ENCODE measurements at regions of chr5 and their contacts with region 1.

Region 1: DNA sequence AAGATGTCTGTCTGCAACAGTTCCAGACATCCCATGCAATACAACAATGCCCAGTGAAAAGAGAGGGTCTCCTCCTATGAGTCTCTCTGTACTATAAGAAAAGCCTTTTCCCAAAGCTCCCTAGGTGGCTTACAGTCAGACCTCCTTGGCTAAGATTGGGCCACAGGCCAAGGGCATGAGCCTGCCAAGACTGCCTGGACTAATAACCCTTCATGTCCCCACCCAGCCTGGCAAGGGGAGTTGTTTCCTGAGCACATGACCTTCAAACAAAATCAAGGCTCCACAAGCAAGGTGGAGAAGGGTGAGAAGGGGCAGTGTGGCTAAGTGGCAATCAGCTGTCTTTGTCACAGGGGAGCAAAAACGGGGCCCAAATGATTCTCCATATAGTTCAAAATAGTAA is 75.6 kb upstream of the ZSWIM6 start:
- DNase-seq: peak in 1 of 2 experiments; percentile 26
- H3K4me3 ChIP-seq: no peak overlapping the region
- H3K27ac ChIP-seq: no peak overlapping the region
- H3K4me1 ChIP-seq: peaks cover 34% of the 10 kb centered on the region
- H3K27me3 ChIP-seq: no peaks in the 10 kb centered on the region
- CTCF ChIP-seq: no peak

Region 2: GRCh38 chr5:60149081-60149480 is 1107.4 kb before region 1 on chr5:
- CTCF ChIA-PET with region 1: no interaction called
- POLR2A ChIA-PET with region 1: interaction called, 10 read pairs
- intact Hi-C with region 1: no loop called
- DNase-seq: no peak
- H3K4me3 ChIP-seq: no peak overlapping the region
- H3K27ac ChIP-seq: no peak overlapping the region
- H3K4me1 ChIP-seq: no peaks in the 10 kb centered on the region
- H3K27me3 ChIP-seq: no peaks in the 10 kb centered on the region
- CTCF ChIP-seq: no peak

Region 3: GRCh38 chr5:60436518-60436917 is 820.0 kb before region 1 on chr5:
- CTCF ChIA-PET with region 1: no interaction called
- POLR2A ChIA-PET with region 1: no interaction called
- intact Hi-C with region 1: no loop called
- DNase-seq: no peak
- H3K4me3 ChIP-seq: no peak overlapping the region
- H3K27ac ChIP-seq: no peak overlapping the region
- H3K4me1 ChIP-seq: no peaks in the 10 kb centered on the region
- H3K27me3 ChIP-seq: no peaks in the 10 kb centered on the region
- CTCF ChIP-seq: no peak

Region 4: DNA sequence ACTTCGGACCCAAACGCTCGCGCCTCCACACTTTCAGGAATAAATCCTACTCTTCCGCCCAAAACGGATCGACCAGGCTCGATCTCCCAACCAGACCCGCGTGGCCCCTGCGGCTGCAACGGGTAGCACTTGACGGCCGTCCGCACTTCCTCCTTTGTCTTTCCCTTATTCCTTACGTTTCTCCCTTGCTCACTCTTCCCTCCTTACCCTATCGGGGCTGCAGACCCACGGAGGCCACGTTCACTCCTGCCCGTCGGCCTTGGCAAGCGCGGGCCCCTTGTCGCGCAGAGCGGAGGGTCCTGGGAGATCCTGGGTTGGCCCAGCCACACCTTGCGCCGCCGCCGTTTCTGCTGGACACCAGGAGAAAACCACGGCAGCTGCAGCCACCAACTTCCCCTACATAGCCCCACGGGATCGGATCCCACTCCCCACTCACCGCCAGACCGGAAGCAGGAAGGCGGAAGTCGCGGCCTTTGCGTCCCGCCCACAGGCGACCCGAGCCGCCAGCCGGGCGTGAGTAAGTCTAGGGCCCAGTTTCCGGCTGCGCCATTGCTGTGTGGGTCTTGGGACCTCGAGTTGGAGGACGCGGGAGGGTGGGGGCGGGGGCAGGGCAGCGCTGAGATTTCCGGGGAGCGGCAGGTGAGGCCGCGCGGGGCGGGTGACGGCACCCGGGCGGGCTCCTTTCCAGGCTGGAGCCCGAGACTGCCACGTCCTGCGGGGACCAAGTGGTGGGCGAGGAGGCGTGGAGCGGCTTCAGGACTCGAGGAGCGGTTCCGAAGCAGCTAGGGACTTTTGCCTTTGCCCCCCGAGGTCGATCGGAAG is 94.3 kb before region 1 on chr5 and contains the start of gene SMIM15:
- CTCF ChIA-PET with region 1: no interaction called
- POLR2A ChIA-PET with region 1: no interaction called
- intact Hi-C with region 1: loop called (anchors 10 kb)
- DNase-seq: peak; percentile 81 to 85
- H3K4me3 ChIP-seq: peak within 1 kb of the TSS; percentile 95
- H3K27ac ChIP-seq: peak within 1 kb of the TSS; percentile 76
- H3K4me1 ChIP-seq: peaks cover 30% of the 10 kb centered on the region
- H3K27me3 ChIP-seq: no peaks in the 10 kb centered on the region
- CTCF ChIP-seq: no peak
- total RNA-seq, gene SMIM15: 50.6 and 58.2 TPM in 2 replicates

Region 5: GRCh38 chr5:61290791-61291210 is 34.3 kb after region 1 on chr5:
- CTCF ChIA-PET with region 1: no interaction called
- POLR2A ChIA-PET with region 1: interaction called, 7 read pairs
- intact Hi-C with region 1: loop called (anchors 1 kb)
- DNase-seq: peak; percentile 53 to 59
- H3K4me3 ChIP-seq: no peak overlapping the region
- H3K27ac ChIP-seq: no peak overlapping the region
- H3K4me1 ChIP-seq: peaks cover 32% of the 10 kb centered on the region
- H3K27me3 ChIP-seq: no peaks in the 10 kb centered on the region
- CTCF ChIP-seq: no peak

Region 6: GRCh38 chr5:61306511-61307131 is 50.1 kb after region 1 on chr5:
- CTCF ChIA-PET with region 1: no interaction called
- POLR2A ChIA-PET with region 1: interaction called, 5 read pairs
- intact Hi-C with region 1: loop called (anchors 2 kb)
- DNase-seq: peak in 1 of 2 experiments; percentile 76
- H3K4me3 ChIP-seq: no peak overlapping the region
- H3K27ac ChIP-seq: no peak overlapping the region
- H3K4me1 ChIP-seq: peaks cover 71% of the 10 kb centered on the region
- H3K27me3 ChIP-seq: no peaks in the 10 kb centered on the region
- CTCF ChIP-seq: no peak

Region 7: DNA sequence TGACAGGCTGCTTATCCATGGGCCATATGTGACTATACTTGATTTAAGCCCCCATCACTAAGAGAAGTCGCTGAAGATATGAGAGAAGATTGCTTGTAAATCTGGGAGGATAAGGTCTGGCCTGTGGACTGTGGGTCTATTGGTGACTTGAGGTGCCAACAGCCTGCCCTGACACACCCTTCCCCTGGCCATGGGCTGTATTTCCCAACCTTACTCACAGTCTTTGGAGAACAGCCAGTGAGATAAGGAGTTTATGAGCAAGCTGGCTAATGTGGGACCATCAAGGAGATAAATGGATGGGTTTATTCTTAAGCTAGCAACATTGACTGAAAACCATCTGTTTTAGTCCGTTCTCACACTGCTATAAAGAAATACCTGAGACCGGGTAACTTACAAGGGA is 306.9 kb after region 1 on chr5:
- CTCF ChIA-PET with region 1: no interaction called
- POLR2A ChIA-PET with region 1: no interaction called
- intact Hi-C with region 1: no loop called
- DNase-seq: no peak
- H3K4me3 ChIP-seq: no peak overlapping the region
- H3K27ac ChIP-seq: no peak overlapping the region
- H3K4me1 ChIP-seq: no peaks in the 10 kb centered on the region
- H3K27me3 ChIP-seq: peaks cover 19% of the 10 kb centered on the region; the same call in 1 of the 2 replicates
- CTCF ChIP-seq: no peak